Posterior vena cava (tissue), 2 donors: ENCODE measurements at regions of chr21 and their contacts with region 1.

Region 1: GRCh38 chr21:39867198-39867650 is at the start of gene PCP4:
- DNase-seq: no peak
- total RNA-seq, gene PCP4: 15.3 to 51.4 TPM

Region 2: GRCh38 chr21:39788383-39788782 is 78.8 kb before region 1 on chr21:
- intact Hi-C with region 1: loop called in 1 of 2 experiments (anchors 5 kb)
- DNase-seq: peak; percentile 88

Region 3: GRCh38 chr21:40120940-40121575 is 253.8 kb after region 1 on chr21:
- intact Hi-C with region 1: loop called (anchors 2 to 10 kb)
- DNase-seq: no peak

Region 4: GRCh38 chr21:40512590-40512989 is 645.4 kb after region 1 on chr21:
- intact Hi-C with region 1: loop called in 1 of 2 experiments (anchors 5 kb)
- DNase-seq: no peak